Activated CD8-positive, alpha-beta T cell treated with anti-CD3 and anti-CD28 coated beads, Interleukin-2, amount 10 ng/mL, durations not matched to agents 7 days and 5 days (primary cell): ENCODE measurements at regions of chr15 and their contacts with region 1.

Region 1: DNA sequence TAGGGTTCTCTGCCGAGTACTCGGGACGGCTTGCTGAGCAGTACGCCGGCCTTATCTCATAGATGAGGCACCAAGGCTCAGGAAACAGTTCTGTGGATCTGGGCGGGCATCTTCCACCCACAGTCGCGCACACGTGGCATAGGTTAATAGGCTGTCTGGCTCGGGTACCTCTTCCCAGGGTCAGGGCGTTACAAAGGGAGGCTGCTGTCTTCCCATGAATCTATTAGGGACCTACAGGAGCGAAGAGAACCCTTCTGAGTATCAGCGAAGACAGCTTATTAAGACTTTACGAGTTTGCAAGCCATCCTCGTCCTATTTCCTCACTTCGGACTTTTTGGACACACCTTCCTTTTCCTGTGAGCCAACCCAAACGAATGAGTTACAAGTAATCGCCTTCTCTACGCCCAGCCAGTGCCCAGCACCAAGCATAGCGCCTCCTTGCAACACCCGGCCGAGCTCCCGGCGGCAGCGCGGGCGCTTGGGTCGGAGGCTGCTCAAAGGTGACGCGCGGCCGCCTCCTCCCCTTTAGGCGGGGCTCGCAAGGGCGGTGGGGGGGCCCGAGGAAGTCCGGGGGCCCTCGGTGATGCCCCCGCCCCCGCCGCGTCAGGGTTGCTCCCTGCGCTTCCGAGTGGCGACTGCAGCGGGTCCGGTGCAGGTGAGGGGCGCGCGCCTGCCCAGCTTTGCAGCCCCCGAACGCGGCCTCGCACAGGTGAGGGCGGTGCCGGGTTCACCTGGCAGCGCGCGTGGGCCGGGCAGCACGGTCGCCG is at the start of gene MCTP2:
- DNase-seq: peak; percentile 92
- ATAC-seq: peak; percentile 90
- H3K4me3 Mint-ChIP-seq: peak within 1 kb of the TSS; percentile 92
- H3K27ac Mint-ChIP-seq: peak within 1 kb of the TSS; percentile 96
- H3K4me1 Mint-ChIP-seq: peaks cover 66% of the 10 kb centered on the region
- H3K27me3 Mint-ChIP-seq: peaks cover 3% of the 10 kb centered on the region
- total RNA-seq, gene MCTP2: 26.2 to 26.9 TPM

Region 2: GRCh38 chr15:94287794-94288246 is 56.7 kb after region 1 on chr15:
- CTCF ChIA-PET with region 1: interaction called, 41 read pairs
- POLR2A ChIA-PET with region 1: interaction called, 37 read pairs
- DNase-seq: peak; percentile 77
- ATAC-seq: peak; percentile 95
- H3K4me3 Mint-ChIP-seq: peak overlapping the region; percentile 66
- H3K27ac Mint-ChIP-seq: peak overlapping the region; percentile 72
- H3K4me1 Mint-ChIP-seq: peaks cover 52% of the 10 kb centered on the region
- H3K27me3 Mint-ChIP-seq: no peaks in the 10 kb centered on the region

Region 3: GRCh38 chr15:94297558-94297957 is 66.4 kb after region 1 on chr15:
- CTCF ChIA-PET with region 1: interaction called, 13 read pairs
- POLR2A ChIA-PET with region 1: interaction called, 3 read pairs
- DNase-seq: no peak
- ATAC-seq: peak; percentile 58
- H3K4me3 Mint-ChIP-seq: peak overlapping the region; percentile 58
- H3K27ac Mint-ChIP-seq: peak overlapping the region; percentile 68
- H3K4me1 Mint-ChIP-seq: peaks cover 79% of the 10 kb centered on the region
- H3K27me3 Mint-ChIP-seq: no peaks in the 10 kb centered on the region

Region 4: GRCh38 chr15:94306700-94307650 is 75.8 kb after region 1 on chr15:
- CTCF ChIA-PET with region 1: interaction called, 53 read pairs
- POLR2A ChIA-PET with region 1: interaction called, 37 read pairs
- DNase-seq: peak; percentile 51
- ATAC-seq: peak; percentile 38
- H3K4me3 Mint-ChIP-seq: peak overlapping the region; percentile 37
- H3K27ac Mint-ChIP-seq: peak overlapping the region; percentile 88
- H3K4me1 Mint-ChIP-seq: peaks cover 66% of the 10 kb centered on the region
- H3K27me3 Mint-ChIP-seq: no peaks in the 10 kb centered on the region